Activated T-helper 2 cell treated with anti-CD3 and anti-CD28 coated beads, Interferon-gamma antibody, Interleukin-2, Interleukin-4, amounts not matched to agents 10 μg/mL and 5 μg/mL and 100 μg/mL, durations not matched to agents 14 hours and 24 hours and 36 hours (primary cell): ENCODE measurements at regions of chr13 and their contacts with region 1.

Region 1: DNA sequence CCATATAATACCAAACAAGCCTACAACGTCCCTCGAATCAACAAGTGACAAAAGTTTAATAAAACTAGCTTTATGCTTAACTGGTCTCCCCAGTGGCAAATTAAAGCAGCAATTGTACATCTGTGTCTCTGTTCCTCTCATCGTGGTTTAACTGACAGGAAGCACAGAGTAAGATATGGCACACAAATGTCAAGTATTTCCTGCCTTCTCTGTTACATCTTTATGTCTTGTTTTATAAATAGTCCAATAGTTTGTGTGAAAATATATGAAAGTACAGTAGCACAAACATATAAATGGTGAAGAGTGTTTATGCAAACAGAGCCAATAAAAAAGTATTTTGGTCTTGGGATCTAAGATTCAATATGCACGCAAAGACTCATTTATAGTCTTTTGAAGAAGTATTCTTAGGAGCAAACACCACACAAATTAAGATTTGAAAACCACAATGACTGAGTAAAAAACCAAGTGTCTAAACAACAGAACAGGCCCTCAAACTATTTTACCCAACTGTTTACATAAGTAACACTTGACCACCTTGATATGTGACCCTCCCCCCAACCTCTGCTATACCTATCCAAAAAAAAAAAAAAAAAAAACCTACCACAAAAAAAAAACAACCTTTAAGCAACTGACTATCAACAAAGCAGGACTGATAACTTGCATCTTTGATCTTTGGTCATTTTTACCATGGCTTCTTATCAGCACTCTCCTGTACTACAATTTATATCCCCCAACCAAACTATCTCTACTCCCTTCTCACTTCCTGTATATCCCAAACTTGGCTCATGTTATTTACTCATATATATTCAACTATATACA is 14.0 kb downstream of the ELF1 start:
- DNase-seq: no peak
- H3K4me3 Mint-ChIP-seq: peak overlapping the region; percentile 64
- H3K27ac Mint-ChIP-seq: peak overlapping the region; percentile 96
- H3K4me1 Mint-ChIP-seq: peaks cover 63% of the 10 kb centered on the region
- H3K27me3 Mint-ChIP-seq: no peaks in the 10 kb centered on the region

Region 2: GRCh38 chr13:40578055-40578454 is 427.0 kb before region 1 on chr13:
- intact Hi-C with region 1: no loop called
- DNase-seq: no peak
- H3K4me3 Mint-ChIP-seq: no peak overlapping the region
- H3K27ac Mint-ChIP-seq: no peak overlapping the region
- H3K4me1 Mint-ChIP-seq: peaks cover 71% of the 10 kb centered on the region
- H3K27me3 Mint-ChIP-seq: no peaks in the 10 kb centered on the region

Region 3: DNA sequence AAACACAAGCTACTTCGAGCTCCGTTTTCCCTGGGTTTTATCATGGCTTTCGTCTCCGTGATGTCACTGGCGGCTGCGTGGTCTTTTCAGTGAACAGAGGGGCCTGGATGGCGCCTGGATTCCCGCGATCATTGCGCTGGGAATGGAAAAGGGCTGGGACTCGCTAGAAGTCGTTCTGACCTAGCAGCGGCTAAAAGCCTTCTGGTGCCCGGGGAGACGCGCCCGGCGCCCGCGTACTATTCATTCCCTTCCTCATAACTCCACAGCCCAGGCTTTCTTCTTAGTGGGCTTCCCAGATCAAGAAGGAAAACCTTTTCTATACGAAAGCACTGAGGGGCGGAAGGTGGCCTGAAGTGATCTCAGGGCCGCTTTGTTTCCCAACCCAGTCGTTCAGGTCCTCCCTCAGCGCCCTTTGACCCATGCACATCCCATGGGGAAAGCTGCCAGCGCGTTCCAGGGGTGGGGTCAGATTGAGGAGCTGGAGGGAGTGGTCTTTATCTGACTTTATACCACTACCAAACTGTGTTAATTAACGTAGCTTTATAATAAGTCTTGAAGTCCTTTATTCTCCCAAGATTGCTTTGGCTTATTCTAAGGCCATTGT is 82.5 kb before region 1 on chr13:
- intact Hi-C with region 1: loop called (anchors 5 kb)
- DNase-seq: no peak
- H3K4me3 Mint-ChIP-seq: peak overlapping the region; percentile 70
- H3K27ac Mint-ChIP-seq: peak overlapping the region; percentile 68
- H3K4me1 Mint-ChIP-seq: peaks cover 9% of the 10 kb centered on the region
- H3K27me3 Mint-ChIP-seq: no peaks in the 10 kb centered on the region

Region 4: GRCh38 chr13:40969169-40969901 is 35.7 kb before region 1 on chr13:
- intact Hi-C with region 1: no loop called
- DNase-seq: no peak
- H3K4me3 Mint-ChIP-seq: no peak overlapping the region
- H3K27ac Mint-ChIP-seq: peak overlapping the region; percentile 11
- H3K4me1 Mint-ChIP-seq: peaks cover 65% of the 10 kb centered on the region
- H3K27me3 Mint-ChIP-seq: no peaks in the 10 kb centered on the region

Region 5: DNA sequence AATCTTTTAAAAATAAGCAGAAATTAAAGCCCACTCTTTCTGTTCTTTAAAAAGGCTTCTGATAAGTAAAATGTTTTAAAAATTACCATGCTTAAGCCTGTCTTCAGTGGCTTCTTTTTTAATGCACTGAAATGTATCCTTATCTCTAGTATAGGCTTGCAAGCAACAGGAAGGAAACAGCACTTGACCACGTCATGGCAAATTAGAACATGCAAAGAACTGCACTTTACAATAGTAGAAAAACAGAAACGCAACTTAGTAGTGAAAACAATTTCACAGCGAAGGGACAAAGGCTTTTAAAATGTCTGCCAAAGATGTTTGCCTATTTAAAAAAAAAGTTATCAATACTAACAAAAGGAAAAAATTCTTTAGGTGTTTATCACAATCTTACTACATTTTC is 22.3 kb before region 1 on chr13:
- intact Hi-C with region 1: loop called (anchors 1 kb)
- DNase-seq: peak; percentile 53
- H3K4me3 Mint-ChIP-seq: peak overlapping the region; percentile 70
- H3K27ac Mint-ChIP-seq: peak overlapping the region; percentile 93
- H3K4me1 Mint-ChIP-seq: peaks cover 68% of the 10 kb centered on the region
- H3K27me3 Mint-ChIP-seq: no peaks in the 10 kb centered on the region

Region 6: DNA sequence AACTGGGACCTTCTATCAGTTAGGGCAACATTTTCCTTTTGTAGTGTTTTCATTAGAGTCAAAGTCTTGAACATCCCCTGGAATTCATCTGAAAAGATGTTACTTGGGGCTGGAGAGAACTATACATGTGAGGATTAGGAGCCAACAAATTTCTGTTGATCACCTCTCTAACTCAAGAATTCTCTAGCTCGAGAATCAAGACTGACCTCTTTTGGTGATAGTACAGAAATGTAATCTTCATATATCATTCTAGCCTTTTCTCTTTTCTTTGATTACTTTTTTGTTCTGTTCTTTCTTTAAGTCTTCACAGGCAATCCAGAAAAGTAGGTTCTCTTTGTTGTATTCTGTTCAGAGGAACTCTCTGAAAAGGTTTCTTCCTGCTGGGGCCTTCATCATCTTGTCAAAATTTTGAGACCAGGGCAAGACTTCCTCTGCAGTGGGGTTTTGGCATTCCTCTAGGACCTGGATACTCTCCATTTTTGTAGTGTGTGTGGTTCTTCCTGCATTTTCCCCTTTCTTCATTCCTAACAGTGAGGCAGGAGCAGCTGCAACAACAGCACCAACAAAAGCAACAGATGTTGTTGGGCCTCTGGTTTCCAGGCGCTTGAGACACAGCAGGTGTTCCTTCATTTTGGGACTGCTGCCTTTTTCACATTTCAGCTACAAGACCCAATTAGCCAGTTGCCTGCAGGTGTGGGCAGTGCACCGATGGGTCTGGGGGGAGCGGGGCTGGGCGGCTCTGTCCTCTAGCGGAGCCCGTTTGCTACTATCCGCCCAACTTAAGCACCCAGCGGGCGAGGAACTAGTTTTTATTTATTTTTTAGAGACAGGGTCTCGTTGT is 12.2 kb before region 1 on chr13:
- intact Hi-C with region 1: loop called (anchors 1 kb)
- DNase-seq: no peak
- H3K4me3 Mint-ChIP-seq: no peak overlapping the region
- H3K27ac Mint-ChIP-seq: peak overlapping the region; percentile 68
- H3K4me1 Mint-ChIP-seq: peaks cover 64% of the 10 kb centered on the region
- H3K27me3 Mint-ChIP-seq: no peaks in the 10 kb centered on the region

Region 7: GRCh38 chr13:41019011-41019487 is 14.0 kb after region 1 on chr13 and contains the start of gene ELF1:
- intact Hi-C with region 1: loop called (anchors 1 kb)
- DNase-seq: peak; percentile 51
- H3K4me3 Mint-ChIP-seq: peak within 1 kb of the TSS; percentile 91
- H3K27ac Mint-ChIP-seq: peak within 1 kb of the TSS; percentile 97
- H3K4me1 Mint-ChIP-seq: peaks cover 38% of the 10 kb centered on the region
- H3K27me3 Mint-ChIP-seq: no peaks in the 10 kb centered on the region
- total RNA-seq, gene ELF1: 65.3 and 68.1 TPM in 2 replicates

Region 8: DNA sequence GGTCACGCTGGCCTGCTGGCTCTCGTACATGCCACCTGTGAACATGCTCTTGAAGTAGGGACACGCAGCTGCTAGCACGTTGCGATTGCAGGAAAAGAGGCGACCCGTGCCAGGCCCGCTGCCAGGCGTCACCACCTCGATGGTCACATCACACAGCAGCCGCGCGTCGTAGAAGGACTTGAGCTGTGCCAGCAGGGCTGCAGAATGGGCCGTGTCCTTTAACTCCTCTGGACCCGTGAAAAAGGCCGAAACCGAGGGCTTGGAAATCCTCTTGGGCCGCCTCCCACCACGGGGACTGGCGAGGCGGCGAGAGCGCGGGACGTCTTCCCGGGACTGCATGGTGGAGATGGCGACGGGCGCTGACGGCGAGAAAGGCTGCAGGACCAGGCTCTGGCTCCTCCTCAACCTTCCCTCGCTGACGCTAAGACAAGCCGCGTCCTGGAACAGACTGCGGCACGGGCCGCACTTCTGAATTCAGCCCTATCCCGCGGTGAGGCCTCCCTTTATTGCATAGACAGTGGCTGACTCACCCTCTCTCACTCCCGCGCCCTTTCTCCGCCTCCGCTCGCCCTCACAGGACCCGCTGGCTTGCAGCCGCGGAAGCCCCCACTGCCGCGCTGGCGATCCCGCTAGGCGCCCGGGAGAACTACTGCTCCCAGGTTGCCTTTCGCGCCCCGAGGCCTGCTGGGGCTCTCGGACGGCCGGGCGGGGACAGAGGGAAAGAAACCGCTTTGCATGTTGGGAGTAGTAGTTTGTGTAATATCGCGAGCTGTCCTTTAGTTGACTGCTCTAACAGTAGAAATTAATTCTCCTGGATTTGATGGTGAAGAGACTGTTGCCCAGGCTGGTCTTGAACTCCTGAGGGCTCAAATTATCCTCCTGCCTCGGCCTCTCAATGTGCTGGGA is 189.1 kb after region 1 on chr13 and contains the start of gene KBTBD7:
- intact Hi-C with region 1: loop called (anchors 1 kb)
- DNase-seq: peak; percentile 88
- H3K4me3 Mint-ChIP-seq: peak within 1 kb of the TSS; percentile 85
- H3K27ac Mint-ChIP-seq: peak within 1 kb of the TSS; percentile 91
- H3K4me1 Mint-ChIP-seq: peaks cover 40% of the 10 kb centered on the region
- H3K27me3 Mint-ChIP-seq: no peaks in the 10 kb centered on the region
- total RNA-seq, gene KBTBD7: 5.1 and 5.8 TPM in 2 replicates

Region 9: DNA sequence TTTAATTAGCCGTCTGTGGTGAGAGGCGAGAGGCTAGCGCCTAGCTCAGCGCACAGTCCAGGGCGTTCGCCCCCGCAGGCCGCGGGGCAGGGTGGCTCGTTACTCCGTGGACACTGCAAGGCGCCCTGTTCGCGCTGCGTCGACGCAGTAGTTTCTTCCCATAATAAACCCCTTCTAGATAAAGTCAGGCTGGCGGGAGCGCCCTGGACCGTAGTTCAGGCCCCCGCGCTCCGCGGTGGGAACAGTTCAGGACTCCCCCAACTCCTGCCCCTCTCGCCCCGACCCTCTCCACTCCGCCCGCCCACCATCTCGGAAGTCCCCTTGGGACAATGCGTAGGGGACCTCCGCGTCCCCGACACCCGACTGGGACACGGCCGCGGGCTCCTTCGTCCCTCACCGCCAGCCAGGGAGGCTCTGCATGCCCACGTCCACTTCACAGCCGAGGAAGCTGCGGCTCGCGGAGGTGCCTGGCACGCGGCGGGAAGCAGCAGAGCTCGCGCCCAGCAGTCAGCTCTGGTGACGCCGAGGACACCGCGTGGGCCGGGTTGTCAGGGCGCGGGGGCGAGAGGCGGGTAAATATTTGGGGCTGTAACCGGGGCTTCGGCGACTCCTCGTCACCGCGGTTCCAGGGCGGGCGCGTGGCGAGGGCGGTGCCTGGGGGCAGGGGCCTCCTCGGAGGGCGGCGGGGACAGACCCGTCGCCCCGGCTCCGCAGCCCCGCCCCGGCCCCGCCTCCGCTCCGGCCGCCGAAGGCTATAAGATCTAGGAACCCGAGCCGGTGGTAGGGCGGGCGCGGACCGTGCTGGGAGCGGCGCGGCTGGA is 451.9 kb after region 1 on chr13 and contains the start of gene RGCC:
- intact Hi-C with region 1: no loop called
- DNase-seq: peak; percentile 83
- H3K4me3 Mint-ChIP-seq: peak within 1 kb of the TSS; percentile 95
- H3K27ac Mint-ChIP-seq: peak within 1 kb of the TSS; percentile 95
- H3K4me1 Mint-ChIP-seq: peaks cover 40% of the 10 kb centered on the region
- H3K27me3 Mint-ChIP-seq: peaks cover 25% of the 10 kb centered on the region
- total RNA-seq, gene RGCC: 76.5 and 79.3 TPM in 2 replicates